ENCODE measurements at regions of chr21 and their contacts with region 1.

Region 1: GRCh38 chr21:34865928-34866284 is 183.2 kb downstream of the RUNX1 start:
- DNase-seq: no peak
- ATAC-seq: no peak
- H3K4me3 ChIP-seq: no peak overlapping the region
- H3K27ac ChIP-seq: peak overlapping the region; percentile 8; the same call in 1 of the 2 replicates
- H3K4me1 ChIP-seq: peaks cover 23% of the 10 kb centered on the region
- H3K27me3 ChIP-seq: no peaks in the 10 kb centered on the region
- CTCF ChIP-seq: no peak
- POLR2A ChIP-seq: no peak
- RAD21 ChIP-seq: no peak

Region 2: DNA sequence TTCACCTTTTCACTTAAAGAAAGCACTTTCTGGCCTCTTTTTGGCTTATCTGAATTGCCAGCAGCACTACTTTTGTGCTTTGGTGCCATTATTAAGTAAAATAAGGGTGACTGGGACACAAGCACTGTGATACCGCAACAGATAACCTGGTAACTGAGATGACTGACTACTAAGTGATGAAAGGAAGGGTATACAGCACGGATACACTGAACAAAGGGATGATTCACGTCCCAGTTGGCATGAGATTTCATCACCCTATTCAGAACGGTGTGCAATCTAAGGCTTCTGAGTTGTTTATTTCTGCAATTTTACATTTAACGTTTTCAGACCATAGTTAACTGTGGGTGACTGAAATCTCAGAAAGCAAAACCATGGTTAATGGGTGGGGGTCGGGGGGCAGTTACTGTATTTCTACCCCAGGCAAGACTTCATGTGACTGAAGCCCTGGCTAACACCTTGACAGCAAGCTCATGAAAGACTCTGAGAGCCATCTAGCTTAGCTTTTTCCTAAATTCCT is 94.3 kb before region 1 on chr21:
- CTCF ChIA-PET with region 1: no interaction called
- POLR2A ChIA-PET with region 1: no interaction called
- dilution Hi-C with region 1: no loop called
- in situ Hi-C with region 1: no loop called
- intact Hi-C with region 1: no loop called
- DNase-seq: peak; percentile 81
- ATAC-seq: peak; percentile 54
- H3K4me3 ChIP-seq: no peak overlapping the region
- H3K27ac ChIP-seq: no peak overlapping the region
- H3K4me1 ChIP-seq: peaks cover 4% of the 10 kb centered on the region
- H3K27me3 ChIP-seq: no peaks in the 10 kb centered on the region; the same call in 1 of the 2 replicates
- CTCF ChIP-seq: no peak
- POLR2A ChIP-seq: no peak
- RAD21 ChIP-seq: no peak

Region 3: GRCh38 chr21:34807146-34807880 is 58.6 kb before region 1 on chr21:
- CTCF ChIA-PET with region 1: no interaction called
- POLR2A ChIA-PET with region 1: no interaction called
- dilution Hi-C with region 1: no loop called
- in situ Hi-C with region 1: no loop called
- intact Hi-C with region 1: loop called (anchors 5 kb)
- DNase-seq: peak; percentile 97
- ATAC-seq: peak; percentile 62
- H3K4me3 ChIP-seq: no peak overlapping the region
- H3K27ac ChIP-seq: peak overlapping the region; percentile 92
- H3K4me1 ChIP-seq: peaks cover 44% of the 10 kb centered on the region
- H3K27me3 ChIP-seq: no peaks in the 10 kb centered on the region
- CTCF ChIP-seq: no peak
- POLR2A ChIP-seq: no peak; the same call in 1 of the 2 replicates
- RAD21 ChIP-seq: no peak

Region 4: GRCh38 chr21:34933609-34934335 is 67.9 kb after region 1 on chr21:
- CTCF ChIA-PET with region 1: no interaction called
- POLR2A ChIA-PET with region 1: no interaction called
- dilution Hi-C with region 1: no loop called
- in situ Hi-C with region 1: no loop called
- intact Hi-C with region 1: no loop called
- DNase-seq: no peak
- ATAC-seq: no peak
- H3K4me3 ChIP-seq: no peak overlapping the region
- H3K27ac ChIP-seq: no peak overlapping the region
- H3K4me1 ChIP-seq: peaks cover 16% of the 10 kb centered on the region
- H3K27me3 ChIP-seq: no peaks in the 10 kb centered on the region
- CTCF ChIP-seq: no peak
- POLR2A ChIP-seq: no peak
- RAD21 ChIP-seq: no peak

Measured in IMR-90 (cell line).